Ovary (tissue), 10 donors: ENCODE measurements at regions of chr11 and their contacts with region 1.

Region 1: GRCh38 chr11:5767056-5767455 is 13.0 kb downstream of the OR52N4 start:
- DNase-seq: no peak
- H3K4me3 ChIP-seq: no peak overlapping the region
- H3K27ac ChIP-seq: no peak overlapping the region
- H3K4me1 ChIP-seq: no peaks in the 10 kb centered on the region
- H3K27me3 ChIP-seq: no peaks in the 10 kb centered on the region
- CTCF ChIP-seq: no peak
- EP300 ChIP-seq: no peak
- POLR2A ChIP-seq: no peak

Region 2: GRCh38 chr11:5791165-5791564 is 24.1 kb after region 1 on chr11 and contains the start of gene OR52N1:
- intact Hi-C with region 1: loop called in 1 of 4 experiments (anchors 2 kb)
- DNase-seq: no peak
- H3K4me3 ChIP-seq: no peak within 1 kb of the TSS
- H3K27ac ChIP-seq: no peak within 1 kb of the TSS
- H3K4me1 ChIP-seq: no peaks in the 10 kb centered on the region
- H3K27me3 ChIP-seq: no peaks in the 10 kb centered on the region
- CTCF ChIP-seq: no peak
- EP300 ChIP-seq: no peak
- POLR2A ChIP-seq: no peak
- total RNA-seq, gene OR52N1: 0.23 TPM in 1 of 7 donors, not detected in the others

Region 3: DNA sequence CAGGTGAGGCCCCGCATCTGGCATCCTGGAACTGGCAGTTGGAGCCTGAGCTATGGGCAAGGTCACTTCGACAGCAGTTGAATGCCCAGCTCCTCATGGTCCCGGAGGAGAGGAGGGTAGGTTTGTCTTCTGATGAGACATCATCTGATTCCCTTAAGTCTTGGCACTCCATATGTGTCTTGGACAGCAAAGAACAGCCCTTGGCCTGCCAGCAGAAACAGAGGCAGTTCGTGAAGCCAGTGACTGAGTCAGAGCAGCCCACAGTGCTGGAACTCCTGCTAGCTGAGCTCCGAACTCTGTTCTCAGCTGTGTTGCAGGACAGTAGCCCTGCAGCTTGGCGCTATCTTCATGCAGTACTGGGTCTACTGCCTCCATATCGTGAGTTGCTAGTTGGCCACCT is 731.1 kb after region 1 on chr11:
- intact Hi-C with region 1: no loop called
- DNase-seq: no peak
- H3K4me3 ChIP-seq: no peak overlapping the region
- H3K27ac ChIP-seq: no peak overlapping the region
- H3K4me1 ChIP-seq: peaks cover 7% of the 10 kb centered on the region
- H3K27me3 ChIP-seq: no peaks in the 10 kb centered on the region
- CTCF ChIP-seq: no peak
- EP300 ChIP-seq: no peak
- POLR2A ChIP-seq: no peak